PC-9 (cell line): ENCODE measurements at regions of chr16 and their contacts with region 1.

Region 1: GRCh38 chr16:10688341-10689125 is 6.2 kb downstream of the TEKT5 start:
- DNase-seq: peak; percentile 61 to 64
- H3K4me3 ChIP-seq: peak overlapping the region; percentile 30; the same call in 1 of the 2 replicates
- H3K27ac ChIP-seq: no peak overlapping the region; the same call in 1 of the 2 replicates
- H3K4me1 ChIP-seq: peaks cover 27% of the 10 kb centered on the region
- H3K27me3 ChIP-seq: no peaks in the 10 kb centered on the region
- CTCF ChIP-seq: no peak

Region 2: DNA sequence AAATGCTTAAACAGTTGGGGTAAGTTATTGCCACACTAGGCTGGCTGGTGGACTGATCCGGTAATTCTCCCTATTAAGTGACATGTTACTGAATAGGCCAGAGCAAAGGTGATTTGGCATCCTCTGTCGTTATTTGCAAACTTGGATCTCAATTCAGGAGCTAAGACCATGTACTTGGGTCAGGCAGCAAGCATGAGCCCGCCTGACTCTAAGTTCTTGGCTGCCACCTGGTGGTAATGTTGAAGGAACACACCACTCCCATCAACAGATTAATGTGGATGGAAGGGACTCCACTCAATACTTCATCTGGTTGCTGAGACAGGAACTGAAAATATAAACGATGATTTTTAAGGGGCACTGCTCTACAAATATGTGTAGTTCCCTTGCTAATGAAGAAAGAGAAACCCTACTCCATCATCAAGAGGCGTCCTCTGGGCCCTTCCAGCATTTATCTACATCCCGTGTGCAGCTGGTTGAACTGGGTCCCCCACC is 179.0 kb before region 1 on chr16:
- CTCF ChIA-PET with region 1: no interaction called
- POLR2A ChIA-PET with region 1: no interaction called
- intact Hi-C with region 1: no loop called
- DNase-seq: peak; percentile 46 to 61
- H3K4me3 ChIP-seq: no peak overlapping the region
- H3K27ac ChIP-seq: no peak overlapping the region
- H3K4me1 ChIP-seq: peaks cover 4% of the 10 kb centered on the region; the same call in 1 of the 2 replicates
- H3K27me3 ChIP-seq: no peaks in the 10 kb centered on the region
- CTCF ChIP-seq: peak; percentile 88

Region 3: DNA sequence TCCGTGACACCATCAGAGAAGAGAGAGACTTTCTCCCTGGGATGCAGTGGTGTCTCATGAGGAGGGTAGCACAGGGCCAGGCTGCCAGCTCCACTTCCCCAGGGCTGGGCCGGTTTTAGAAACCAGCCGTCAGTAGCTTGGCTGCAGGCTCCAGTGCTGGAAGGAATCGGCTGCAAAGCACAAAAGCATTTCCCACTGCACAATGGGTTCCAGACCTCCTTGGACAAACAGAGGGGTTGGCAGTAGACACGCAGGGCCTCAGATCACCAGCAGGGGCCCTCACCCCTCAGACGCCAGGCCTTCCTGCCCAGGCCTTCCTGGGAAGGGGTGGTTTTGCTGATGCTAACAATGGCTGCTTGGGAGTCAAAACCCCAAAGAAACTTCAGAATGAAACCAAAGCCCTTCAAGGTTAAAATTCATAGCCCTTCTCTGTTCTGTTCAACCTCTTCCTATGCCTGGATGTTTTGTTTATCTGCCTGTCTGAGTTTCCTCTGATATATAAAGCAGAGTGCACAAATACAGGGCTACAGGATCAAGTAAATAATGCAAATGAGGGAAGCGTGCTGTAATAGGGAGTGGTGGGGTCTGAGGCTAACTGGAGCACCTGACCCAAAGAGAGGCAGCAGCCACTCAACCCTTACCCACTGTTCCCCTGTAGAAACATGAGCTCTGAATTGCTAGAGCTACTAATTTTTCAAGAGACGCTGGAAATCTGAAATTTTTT is 20.0 kb before region 1 on chr16:
- CTCF ChIA-PET with region 1: interaction called, 10 read pairs
- POLR2A ChIA-PET with region 1: no interaction called
- intact Hi-C with region 1: no loop called
- DNase-seq: peak in 1 of 2 experiments; percentile 38
- H3K4me3 ChIP-seq: no peak overlapping the region
- H3K27ac ChIP-seq: no peak overlapping the region
- H3K4me1 ChIP-seq: no peaks in the 10 kb centered on the region
- H3K27me3 ChIP-seq: no peaks in the 10 kb centered on the region
- CTCF ChIP-seq: peak; percentile 66

Region 4: DNA sequence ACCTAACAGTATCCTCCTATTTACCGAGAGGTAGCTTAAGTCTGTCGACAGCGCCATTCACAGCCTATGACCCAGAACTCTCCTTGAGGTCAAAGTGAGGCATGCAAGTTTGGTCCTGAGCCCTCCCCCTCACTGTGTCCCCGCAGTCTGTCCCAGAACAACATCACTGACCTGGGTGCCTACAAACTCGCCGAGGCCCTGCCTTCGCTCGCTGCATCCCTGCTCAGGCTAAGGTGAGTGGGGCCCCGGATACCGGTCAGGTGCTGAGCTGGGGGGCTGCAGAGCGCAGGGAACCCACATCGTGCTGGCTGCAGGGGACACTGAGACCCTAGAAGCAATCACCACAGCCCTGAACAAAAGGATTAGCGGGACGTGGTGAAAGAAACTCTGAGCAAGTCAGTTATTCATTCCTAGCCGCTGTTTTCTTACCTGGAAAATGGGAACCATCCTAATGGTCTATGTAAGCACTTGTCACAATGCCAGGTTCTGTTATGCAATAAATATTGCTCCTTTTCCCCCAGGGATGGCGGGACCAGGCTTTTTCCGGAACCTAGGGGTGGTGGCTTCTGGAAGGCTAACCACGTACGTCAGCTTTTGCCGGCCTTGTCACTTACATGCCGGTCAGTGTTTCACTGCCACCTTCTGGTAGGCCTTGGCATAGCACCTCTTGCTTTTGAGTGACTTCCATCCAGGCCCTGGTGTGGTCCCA is 229.9 kb after region 1 on chr16:
- CTCF ChIA-PET with region 1: interaction called, 19 read pairs
- POLR2A ChIA-PET with region 1: no interaction called
- intact Hi-C with region 1: no loop called
- DNase-seq: peak; percentile 62 to 89
- H3K4me3 ChIP-seq: no peak overlapping the region
- H3K27ac ChIP-seq: no peak overlapping the region
- H3K4me1 ChIP-seq: no peaks in the 10 kb centered on the region
- H3K27me3 ChIP-seq: no peaks in the 10 kb centered on the region
- CTCF ChIP-seq: peak; percentile 94

Region 5: GRCh38 chr16:11994143-11995119 is 1305.9 kb after region 1 on chr16:
- CTCF ChIA-PET with region 1: interaction called, 12 read pairs
- POLR2A ChIA-PET with region 1: no interaction called
- intact Hi-C with region 1: no loop called
- DNase-seq: no peak
- H3K4me3 ChIP-seq: no peak overlapping the region
- H3K27ac ChIP-seq: no peak overlapping the region
- H3K4me1 ChIP-seq: no peaks in the 10 kb centered on the region
- H3K27me3 ChIP-seq: no peaks in the 10 kb centered on the region
- CTCF ChIP-seq: no peak